MCF 10A (cell line): ENCODE measurements at regions of chr9 and their contacts with region 1.

Region 1: GRCh38 chr9:70413798-70414775 is at the start of gene KLF9:
- DNase-seq: peak; percentile 99
- H3K4me3 Mint-ChIP-seq: peak within 1 kb of the TSS; percentile 98
- H3K27ac Mint-ChIP-seq: peak within 1 kb of the TSS; percentile 99
- H3K4me1 Mint-ChIP-seq: peaks cover 19% of the 10 kb centered on the region
- H3K27me3 Mint-ChIP-seq: no peaks in the 10 kb centered on the region
- CTCF ChIP-seq: no peak
- total RNA-seq, gene KLF9: 5.9 and 8.9 TPM in 2 replicates

Region 2: GRCh38 chr9:70340572-70340971 is 73.5 kb before region 1 on chr9:
- CTCF ChIA-PET with region 1: interaction called, 4 read pairs
- POLR2A ChIA-PET with region 1: interaction called, 9 read pairs
- intact Hi-C with region 1: loop called (anchors 2 kb)
- DNase-seq: peak; percentile 25
- H3K4me3 Mint-ChIP-seq: no peak overlapping the region
- H3K27ac Mint-ChIP-seq: no peak overlapping the region
- H3K4me1 Mint-ChIP-seq: no peaks in the 10 kb centered on the region
- H3K27me3 Mint-ChIP-seq: no peaks in the 10 kb centered on the region
- CTCF ChIP-seq: peak; percentile 23

Region 3: GRCh38 chr9:70403618-70404025 is 10.5 kb before region 1 on chr9:
- CTCF ChIA-PET with region 1: interaction called, 4 read pairs
- POLR2A ChIA-PET with region 1: interaction called, 12 read pairs
- intact Hi-C with region 1: no loop called
- DNase-seq: no peak
- H3K4me3 Mint-ChIP-seq: no peak overlapping the region
- H3K27ac Mint-ChIP-seq: no peak overlapping the region
- H3K4me1 Mint-ChIP-seq: peaks cover 19% of the 10 kb centered on the region
- H3K27me3 Mint-ChIP-seq: no peaks in the 10 kb centered on the region
- CTCF ChIP-seq: no peak

Region 4: DNA sequence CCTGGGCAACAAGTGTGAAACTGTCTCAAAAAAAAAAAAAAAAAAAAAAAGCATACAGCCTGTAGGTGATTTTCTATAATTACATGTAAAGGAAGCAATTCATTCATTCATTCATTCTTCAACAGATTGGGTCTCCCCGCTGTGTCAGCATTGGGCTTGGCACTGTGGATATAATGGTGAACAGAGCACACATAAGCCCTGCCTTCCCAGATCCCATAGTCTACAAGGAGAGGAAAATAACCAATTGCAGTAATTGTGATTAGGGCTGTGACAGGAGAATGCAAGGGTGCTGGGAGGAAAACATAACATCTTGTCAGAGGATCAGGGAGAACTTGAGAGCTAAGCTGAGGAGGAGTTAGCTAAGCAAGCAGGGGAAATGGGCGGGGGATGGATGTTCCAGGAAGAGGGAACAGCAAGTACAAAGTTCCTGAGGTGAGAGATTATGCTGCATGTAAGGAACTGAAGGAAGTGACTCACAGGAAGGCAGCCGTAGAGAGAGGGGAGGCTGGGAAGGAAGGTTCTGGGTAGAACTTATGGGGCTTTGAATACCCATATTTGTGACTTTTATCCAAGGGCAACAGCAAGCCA is 24.3 kb after region 1 on chr9:
- CTCF ChIA-PET with region 1: no interaction called
- POLR2A ChIA-PET with region 1: interaction called, 16 read pairs
- intact Hi-C with region 1: no loop called
- DNase-seq: peak; percentile 92
- H3K4me3 Mint-ChIP-seq: no peak overlapping the region
- H3K27ac Mint-ChIP-seq: peak overlapping the region; percentile 80
- H3K4me1 Mint-ChIP-seq: peaks cover 23% of the 10 kb centered on the region
- H3K27me3 Mint-ChIP-seq: no peaks in the 10 kb centered on the region
- CTCF ChIP-seq: no peak

Region 5: DNA sequence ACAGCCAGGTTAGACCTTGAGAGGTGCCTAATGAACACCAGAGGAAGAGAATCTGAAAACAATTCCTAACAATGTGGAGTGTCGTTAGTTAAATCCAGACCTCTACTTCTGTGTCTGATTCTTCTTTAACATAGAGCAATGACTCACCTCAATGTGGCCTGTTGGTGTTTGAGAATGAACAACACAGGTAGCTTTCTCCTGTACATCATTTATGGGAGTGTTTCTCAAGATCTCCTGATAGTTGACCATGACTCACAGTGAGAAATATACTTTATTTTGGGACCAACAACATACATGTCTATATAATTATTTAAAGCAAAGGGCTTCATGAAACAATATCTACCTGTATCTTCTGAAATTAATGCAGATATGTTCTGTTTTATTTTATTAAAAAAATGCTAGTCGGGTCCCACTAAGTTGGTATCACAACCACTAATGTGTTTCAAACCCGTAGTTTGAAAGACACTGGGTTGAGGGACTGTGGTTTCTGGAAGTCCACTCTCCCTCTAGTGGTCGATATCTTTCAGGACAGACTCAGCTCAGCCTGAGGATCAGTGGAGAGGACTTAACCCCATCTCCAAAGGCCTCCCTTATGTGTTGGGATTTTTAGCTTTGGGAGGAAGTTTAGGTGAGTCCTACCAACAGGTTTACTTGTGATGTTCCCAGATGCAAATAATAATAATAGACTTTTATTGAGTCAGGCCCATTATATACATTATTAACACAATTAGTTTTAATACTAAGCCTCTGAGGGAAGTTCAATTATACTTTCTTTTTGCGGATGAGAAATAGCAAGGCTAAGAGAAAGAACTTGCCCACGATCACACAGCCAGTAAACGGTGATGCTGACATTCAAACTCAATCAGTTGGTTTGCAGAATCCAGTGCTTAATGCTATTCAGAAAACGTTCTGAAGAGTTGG is 70.4 kb after region 1 on chr9:
- CTCF ChIA-PET with region 1: interaction called, 27 read pairs
- POLR2A ChIA-PET with region 1: interaction called, 213 read pairs
- intact Hi-C with region 1: loop called (anchors 1 kb)
- DNase-seq: peak; percentile 83
- H3K4me3 Mint-ChIP-seq: no peak overlapping the region
- H3K27ac Mint-ChIP-seq: peak overlapping the region; percentile 99
- H3K4me1 Mint-ChIP-seq: peaks cover 39% of the 10 kb centered on the region
- H3K27me3 Mint-ChIP-seq: no peaks in the 10 kb centered on the region
- CTCF ChIP-seq: peak; percentile 68

Region 6: GRCh38 chr9:70510157-70510770 is 96.2 kb after region 1 on chr9:
- CTCF ChIA-PET with region 1: interaction called, 5 read pairs
- POLR2A ChIA-PET with region 1: interaction called, 16 read pairs
- intact Hi-C with region 1: no loop called
- DNase-seq: peak; percentile 39
- H3K4me3 Mint-ChIP-seq: no peak overlapping the region
- H3K27ac Mint-ChIP-seq: no peak overlapping the region
- H3K4me1 Mint-ChIP-seq: no peaks in the 10 kb centered on the region
- H3K27me3 Mint-ChIP-seq: no peaks in the 10 kb centered on the region
- CTCF ChIP-seq: peak; percentile 50